ENCODE measurements at regions of chr1 and their contacts with region 1.

Region 1: DNA sequence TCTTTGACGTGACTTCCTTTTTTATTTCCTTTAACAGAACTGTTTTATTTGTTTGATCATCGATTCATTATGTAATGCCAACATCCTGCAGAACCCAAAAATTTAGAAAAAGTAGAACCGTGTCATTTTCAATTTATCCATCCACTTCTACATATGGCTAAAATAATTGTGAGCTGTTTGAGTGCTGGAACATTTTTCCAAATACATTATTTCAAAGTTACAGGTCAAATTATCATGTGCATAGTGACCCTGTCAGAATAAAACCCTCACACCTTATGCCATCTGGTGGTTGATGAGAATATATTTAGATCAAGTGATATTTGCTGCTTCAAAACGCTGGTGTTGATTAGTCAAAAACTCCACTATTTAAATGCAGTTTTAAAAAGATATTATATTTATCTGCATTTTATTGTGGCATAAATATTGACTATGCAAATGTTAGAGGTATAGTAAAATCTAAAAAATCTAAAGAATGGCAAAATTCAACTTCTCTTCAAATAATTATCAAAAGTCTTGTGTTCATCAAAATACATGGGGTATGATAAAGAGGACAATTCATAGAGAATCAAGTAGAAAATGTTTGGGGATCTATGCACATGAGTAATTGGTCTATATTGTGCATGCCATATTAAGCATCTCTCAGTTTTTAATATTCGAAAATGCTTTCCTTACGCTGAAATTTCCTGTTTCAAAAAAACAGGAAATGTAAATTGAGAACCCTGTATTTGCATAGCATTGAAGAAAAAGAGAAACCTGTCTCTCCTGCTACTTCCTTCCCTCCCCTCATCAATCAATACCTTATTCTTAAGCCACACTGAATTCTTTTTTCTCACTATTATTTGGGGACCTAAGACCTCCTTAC is 39.7 kb downstream of the UBE2U start:
- DNase-seq: peak; percentile 58
- ATAC-seq: peak; percentile 55; the same call in 1 of the 2 replicates
- H3K4me3 ChIP-seq: no peak overlapping the region
- H3K27ac ChIP-seq: no peak overlapping the region
- H3K4me1 ChIP-seq: no peaks in the 10 kb centered on the region
- H3K27me3 ChIP-seq: peaks cover 2% of the 10 kb centered on the region
- CTCF ChIP-seq: peak; percentile 64
- POLR2A ChIP-seq: no peak
- RAD21 ChIP-seq: peak; percentile 82

Region 2: GRCh38 chr1:63615768-63616420 is 627.2 kb before region 1 on chr1:
- CTCF ChIA-PET with region 1: interaction called, 5 read pairs
- POLR2A ChIA-PET with region 1: no interaction called
- dilution Hi-C with region 1: no loop called
- in situ Hi-C with region 1: loop called (anchors 5 kb)
- intact Hi-C with region 1: loop called (anchors 1 kb)
- DNase-seq: peak; percentile 75
- ATAC-seq: peak; percentile 78
- H3K4me3 ChIP-seq: no peak overlapping the region
- H3K27ac ChIP-seq: no peak overlapping the region
- H3K4me1 ChIP-seq: peaks cover 11% of the 10 kb centered on the region
- H3K27me3 ChIP-seq: no peaks in the 10 kb centered on the region
- CTCF ChIP-seq: peak; percentile 81
- POLR2A ChIP-seq: no peak
- RAD21 ChIP-seq: peak; percentile 85

Region 3: DNA sequence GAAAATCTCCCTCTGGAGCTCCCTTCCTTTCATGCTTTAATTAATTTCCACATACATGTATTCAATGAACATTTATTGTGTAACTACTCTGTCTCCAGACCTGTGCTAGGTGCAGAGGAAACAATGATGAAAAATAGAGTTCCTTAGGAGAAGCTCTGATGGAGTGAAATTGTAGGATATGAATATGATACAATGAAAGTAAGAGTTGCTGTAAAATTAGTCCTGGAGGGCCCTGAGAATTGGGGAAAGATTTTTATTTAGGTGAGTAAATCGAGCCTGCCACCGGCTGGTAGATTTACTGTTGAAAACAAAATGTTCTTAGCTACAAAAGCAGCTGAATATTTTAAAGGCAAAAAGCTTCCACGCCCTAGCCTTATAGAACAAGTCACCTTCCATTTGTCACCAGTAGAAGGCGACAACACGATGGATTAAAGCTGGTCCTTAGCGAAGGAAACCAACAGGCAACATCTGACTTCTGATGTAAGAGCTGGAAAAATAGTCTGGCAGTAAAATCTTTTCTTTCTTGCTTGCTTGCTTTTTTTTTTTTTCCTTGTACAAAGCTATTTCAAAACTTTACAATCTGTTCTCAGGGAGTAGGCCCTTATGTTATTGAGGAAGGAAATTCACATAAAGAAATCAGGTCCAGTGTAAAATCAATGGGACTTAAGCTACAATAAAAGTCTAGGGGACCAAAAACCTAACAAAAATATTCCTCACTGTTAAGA is 551.3 kb before region 1 on chr1:
- CTCF ChIA-PET with region 1: interaction called, 17 read pairs
- POLR2A ChIA-PET with region 1: no interaction called
- dilution Hi-C with region 1: no loop called
- in situ Hi-C with region 1: no loop called
- intact Hi-C with region 1: loop called (anchors 1 kb)
- DNase-seq: peak; percentile 94
- ATAC-seq: peak; percentile 89
- H3K4me3 ChIP-seq: no peak overlapping the region
- H3K27ac ChIP-seq: no peak overlapping the region
- H3K4me1 ChIP-seq: peaks cover 2% of the 10 kb centered on the region; the same call in 1 of the 2 replicates
- H3K27me3 ChIP-seq: no peaks in the 10 kb centered on the region; the same call in 1 of the 2 replicates
- CTCF ChIP-seq: peak; percentile 84
- POLR2A ChIP-seq: no peak
- RAD21 ChIP-seq: peak; percentile 87

Region 4: GRCh38 chr1:64038965-64039926 is 203.9 kb before region 1 on chr1:
- CTCF ChIA-PET with region 1: no interaction called
- POLR2A ChIA-PET with region 1: no interaction called
- dilution Hi-C with region 1: no loop called
- in situ Hi-C with region 1: no loop called
- intact Hi-C with region 1: loop called (anchors 10 kb)
- DNase-seq: peak; percentile 100
- ATAC-seq: peak; percentile 84
- H3K4me3 ChIP-seq: no peak overlapping the region
- H3K27ac ChIP-seq: peak overlapping the region; percentile 51; the same call in 1 of the 2 replicates
- H3K4me1 ChIP-seq: peaks cover 22% of the 10 kb centered on the region
- H3K27me3 ChIP-seq: no peaks in the 10 kb centered on the region
- CTCF ChIP-seq: no peak
- POLR2A ChIP-seq: no peak
- RAD21 ChIP-seq: no peak; the same call in 1 of the 2 replicates

Region 5: GRCh38 chr1:64163970-64164369 is 79.2 kb before region 1 on chr1:
- CTCF ChIA-PET with region 1: interaction called, 3 read pairs
- POLR2A ChIA-PET with region 1: no interaction called
- dilution Hi-C with region 1: no loop called
- in situ Hi-C with region 1: loop called (anchors 5 kb)
- intact Hi-C with region 1: loop called (anchors 2 kb)
- DNase-seq: peak; percentile 64
- ATAC-seq: peak; percentile 73
- H3K4me3 ChIP-seq: no peak overlapping the region
- H3K27ac ChIP-seq: no peak overlapping the region
- H3K4me1 ChIP-seq: peaks cover 2% of the 10 kb centered on the region
- H3K27me3 ChIP-seq: no peaks in the 10 kb centered on the region
- CTCF ChIP-seq: peak; percentile 70
- POLR2A ChIP-seq: no peak
- RAD21 ChIP-seq: peak; percentile 66

Region 6: GRCh38 chr1:64320470-64320869 is 77.3 kb after region 1 on chr1:
- CTCF ChIA-PET with region 1: no interaction called
- POLR2A ChIA-PET with region 1: no interaction called
- dilution Hi-C with region 1: no loop called
- in situ Hi-C with region 1: no loop called
- intact Hi-C with region 1: no loop called
- DNase-seq: peak; percentile 18
- ATAC-seq: peak; percentile 48
- H3K4me3 ChIP-seq: no peak overlapping the region
- H3K27ac ChIP-seq: no peak overlapping the region
- H3K4me1 ChIP-seq: peaks cover 2% of the 10 kb centered on the region; the same call in 1 of the 2 replicates
- H3K27me3 ChIP-seq: peaks cover 4% of the 10 kb centered on the region; the same call in 1 of the 2 replicates
- CTCF ChIP-seq: no peak
- POLR2A ChIP-seq: no peak
- RAD21 ChIP-seq: no peak